IMR-90 (cell line): ENCODE measurements at regions of chr6 and their contacts with region 1.

Region 1: DNA sequence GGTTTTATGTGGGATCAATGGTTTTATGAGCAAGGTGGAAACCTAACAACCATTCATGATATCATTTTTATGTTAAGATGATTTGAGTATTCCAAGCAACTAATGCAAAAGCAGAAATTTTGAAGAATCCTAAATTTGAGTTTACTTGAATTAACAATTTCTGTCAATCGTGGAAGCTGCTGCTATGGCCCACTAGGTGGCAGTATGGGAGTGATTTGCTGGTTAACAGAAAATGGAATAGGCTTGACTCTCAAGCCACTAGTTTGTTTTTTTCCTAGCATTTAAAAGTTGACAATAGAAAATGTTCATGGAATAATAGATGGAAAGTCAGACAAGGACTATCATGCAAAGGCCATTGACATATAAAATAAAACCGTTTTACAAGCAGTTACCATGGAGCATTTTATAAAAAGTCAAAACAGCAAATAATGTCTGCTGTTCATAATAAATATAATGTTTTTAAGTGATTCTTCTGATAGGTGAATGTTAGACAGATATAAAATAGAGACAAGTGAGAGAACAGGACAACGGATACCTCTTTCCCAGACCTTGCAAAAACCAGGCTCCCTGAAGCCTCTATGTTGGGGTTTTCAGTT is 43.0 kb upstream of the TMEM200A start:
- DNase-seq: peak; percentile 82
- ATAC-seq: peak; percentile 82
- H3K4me3 ChIP-seq: no peak overlapping the region
- H3K27ac ChIP-seq: no peak overlapping the region
- H3K4me1 ChIP-seq: 0 out of 2 replicates have a peak, but pooled peaks cover 1% of the 10 kb centered on the region
- H3K27me3 ChIP-seq: no peaks in the 10 kb centered on the region; the same call in 1 of the 2 replicates
- CTCF ChIP-seq: peak; percentile 96
- POLR2A ChIP-seq: peak; percentile 32; the same call in 1 of the 2 replicates
- RAD21 ChIP-seq: peak; percentile 91

Region 2: GRCh38 chr6:130365166-130366106 is 42.7 kb after region 1 on chr6 and contains the start of gene TMEM200A:
- CTCF ChIA-PET with region 1: no interaction called
- POLR2A ChIA-PET with region 1: no interaction called
- dilution Hi-C with region 1: no loop called
- in situ Hi-C with region 1: no loop called
- intact Hi-C with region 1: loop called (anchors 2 kb)
- DNase-seq: peak; percentile 70
- ATAC-seq: peak; percentile 76
- H3K4me3 ChIP-seq: peak within 1 kb of the TSS; percentile 85
- H3K27ac ChIP-seq: peak within 1 kb of the TSS; percentile 82
- H3K4me1 ChIP-seq: peaks cover 5% of the 10 kb centered on the region
- H3K27me3 ChIP-seq: no peaks in the 10 kb centered on the region
- CTCF ChIP-seq: peak; percentile 85
- POLR2A ChIP-seq: peak; percentile 15; the same call in 1 of the 2 replicates
- RAD21 ChIP-seq: peak; percentile 75
- total RNA-seq, gene TMEM200A: 37.1 and 47.8 TPM in 2 replicates

Region 3: GRCh38 chr6:130697995-130698535 is 375.3 kb after region 1 on chr6:
- CTCF ChIA-PET with region 1: interaction called, 6 read pairs
- POLR2A ChIA-PET with region 1: no interaction called
- dilution Hi-C with region 1: no loop called
- in situ Hi-C with region 1: loop called (anchors 5 kb)
- intact Hi-C with region 1: loop called (anchors 1 kb)
- DNase-seq: peak; percentile 66
- ATAC-seq: peak; percentile 96
- H3K4me3 ChIP-seq: no peak overlapping the region
- H3K27ac ChIP-seq: no peak overlapping the region
- H3K4me1 ChIP-seq: no peaks in the 10 kb centered on the region; the same call in 1 of the 2 replicates
- H3K27me3 ChIP-seq: peaks cover 4% of the 10 kb centered on the region
- CTCF ChIP-seq: peak; percentile 89
- POLR2A ChIP-seq: 0 out of 2 replicates have a peak, but pooled peaks have one; percentile 45
- RAD21 ChIP-seq: peak; percentile 93

Region 4: GRCh38 chr6:130843575-130844320 is 521.0 kb after region 1 on chr6:
- CTCF ChIA-PET with region 1: no interaction called
- POLR2A ChIA-PET with region 1: no interaction called
- dilution Hi-C with region 1: no loop called
- in situ Hi-C with region 1: loop called (anchors 10 kb)
- intact Hi-C with region 1: loop called (anchors 2 kb)
- DNase-seq: peak; percentile 33
- ATAC-seq: peak; percentile 56; the same call in 1 of the 2 replicates
- H3K4me3 ChIP-seq: no peak overlapping the region
- H3K27ac ChIP-seq: no peak overlapping the region
- H3K4me1 ChIP-seq: peaks cover 6% of the 10 kb centered on the region
- H3K27me3 ChIP-seq: no peaks in the 10 kb centered on the region
- CTCF ChIP-seq: peak; percentile 52
- POLR2A ChIP-seq: no peak
- RAD21 ChIP-seq: peak; percentile 64

Region 5: DNA sequence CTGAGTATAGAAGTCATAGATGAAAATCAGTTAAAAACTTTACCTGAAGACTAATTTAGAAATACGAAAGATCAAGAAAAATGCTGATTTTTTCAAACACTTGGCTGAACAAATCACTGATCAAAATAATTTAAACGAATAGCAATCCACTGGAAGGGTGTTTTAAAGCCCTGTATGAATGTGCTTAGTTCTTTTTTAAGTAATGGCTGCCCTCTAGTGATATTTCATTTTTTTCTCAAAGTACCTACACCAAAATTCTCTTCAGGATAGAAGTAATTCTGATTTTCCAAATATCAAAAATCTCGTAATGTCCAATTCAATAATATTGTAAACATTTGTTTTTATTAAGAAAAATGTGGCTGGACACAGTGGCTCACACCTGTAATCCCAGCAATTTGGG is 845.0 kb after region 1 on chr6:
- CTCF ChIA-PET with region 1: no interaction called
- POLR2A ChIA-PET with region 1: no interaction called
- dilution Hi-C with region 1: no loop called
- in situ Hi-C with region 1: no loop called
- intact Hi-C with region 1: loop called (anchors 10 kb)
- DNase-seq: peak; percentile 17
- ATAC-seq: peak; percentile 47; the same call in 1 of the 2 replicates
- H3K4me3 ChIP-seq: no peak overlapping the region
- H3K27ac ChIP-seq: no peak overlapping the region
- H3K4me1 ChIP-seq: 0 out of 2 replicates have a peak, but pooled peaks cover 2% of the 10 kb centered on the region
- H3K27me3 ChIP-seq: no peaks in the 10 kb centered on the region
- CTCF ChIP-seq: peak; percentile 38
- POLR2A ChIP-seq: no peak
- RAD21 ChIP-seq: peak; percentile 42